OCI-LY7 (cell line): ENCODE measurements at regions of chr2 and their contacts with region 1.

Region 1: GRCh38 chr2:176169181-176169580 is 12.1 kb downstream of the HOXD3 start:
- DNase-seq: no peak
- H3K4me3 ChIP-seq: no peak overlapping the region
- H3K27ac ChIP-seq: no peak overlapping the region
- H3K4me1 ChIP-seq: no peaks in the 10 kb centered on the region
- CTCF ChIP-seq: no peak

Region 2: DNA sequence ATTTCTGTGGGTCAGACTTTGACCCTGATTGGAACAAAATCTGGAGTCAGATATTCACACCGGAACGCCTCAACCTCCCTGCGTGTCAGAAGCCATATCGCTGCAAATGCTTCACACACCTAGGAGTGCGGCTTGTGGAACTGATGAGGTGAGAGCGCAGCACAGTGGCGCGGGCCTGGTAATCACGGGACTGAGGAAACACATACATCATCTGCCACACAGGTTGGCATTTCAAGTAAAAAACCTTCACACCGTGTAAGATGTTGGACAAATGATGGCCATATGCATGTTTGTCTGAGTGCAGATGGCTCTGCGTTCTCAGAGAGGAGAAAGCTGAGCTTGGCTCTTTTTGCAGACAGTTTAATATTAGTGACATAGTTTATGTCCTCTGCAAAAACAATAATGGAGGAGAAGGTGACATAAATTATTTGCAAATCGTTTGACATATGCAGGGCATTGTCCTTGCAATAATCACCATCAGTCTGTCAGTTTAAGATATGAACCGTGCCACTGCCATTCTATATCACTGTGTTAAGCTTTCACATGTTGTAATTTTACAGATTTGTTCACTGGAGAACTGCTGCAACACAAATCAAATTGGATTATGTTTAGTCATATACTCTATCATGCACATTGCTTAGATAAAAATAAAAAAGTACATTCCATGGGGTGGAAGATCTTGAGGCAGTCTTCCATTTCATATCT is 201.4 kb after region 1 on chr2:
- CTCF ChIA-PET with region 1: no interaction called
- POLR2A ChIA-PET with region 1: interaction called, 11 read pairs
- intact Hi-C with region 1: no loop called
- DNase-seq: no peak
- H3K4me3 ChIP-seq: no peak overlapping the region
- H3K27ac ChIP-seq: no peak overlapping the region
- H3K4me1 ChIP-seq: no peaks in the 10 kb centered on the region
- CTCF ChIP-seq: no peak

Region 3: DNA sequence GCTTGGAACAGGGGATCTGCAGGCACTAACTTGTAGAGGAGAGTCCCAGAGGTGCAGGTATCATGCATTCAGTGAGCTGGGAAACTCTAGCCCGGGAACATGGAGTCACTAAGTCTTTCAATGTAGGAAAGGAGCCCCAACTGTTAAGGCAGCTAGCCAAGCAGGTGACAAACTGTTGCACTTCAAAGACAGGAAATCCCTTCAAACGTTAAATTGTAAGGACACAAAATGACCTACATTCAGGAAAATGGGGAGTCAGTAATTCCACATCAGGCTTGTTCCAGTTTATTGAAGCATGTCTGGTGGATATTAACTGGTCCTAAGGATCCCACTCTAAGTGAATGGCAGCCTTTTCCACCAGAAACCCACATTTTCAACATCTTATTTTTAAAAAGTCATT is 464.6 kb after region 1 on chr2:
- CTCF ChIA-PET with region 1: no interaction called
- POLR2A ChIA-PET with region 1: no interaction called
- intact Hi-C with region 1: no loop called
- DNase-seq: no peak
- H3K4me3 ChIP-seq: no peak overlapping the region
- H3K27ac ChIP-seq: no peak overlapping the region
- H3K4me1 ChIP-seq: no peaks in the 10 kb centered on the region
- CTCF ChIP-seq: no peak